ENCODE measurements at regions of chr14 and their contacts with region 1.

Region 1: DNA sequence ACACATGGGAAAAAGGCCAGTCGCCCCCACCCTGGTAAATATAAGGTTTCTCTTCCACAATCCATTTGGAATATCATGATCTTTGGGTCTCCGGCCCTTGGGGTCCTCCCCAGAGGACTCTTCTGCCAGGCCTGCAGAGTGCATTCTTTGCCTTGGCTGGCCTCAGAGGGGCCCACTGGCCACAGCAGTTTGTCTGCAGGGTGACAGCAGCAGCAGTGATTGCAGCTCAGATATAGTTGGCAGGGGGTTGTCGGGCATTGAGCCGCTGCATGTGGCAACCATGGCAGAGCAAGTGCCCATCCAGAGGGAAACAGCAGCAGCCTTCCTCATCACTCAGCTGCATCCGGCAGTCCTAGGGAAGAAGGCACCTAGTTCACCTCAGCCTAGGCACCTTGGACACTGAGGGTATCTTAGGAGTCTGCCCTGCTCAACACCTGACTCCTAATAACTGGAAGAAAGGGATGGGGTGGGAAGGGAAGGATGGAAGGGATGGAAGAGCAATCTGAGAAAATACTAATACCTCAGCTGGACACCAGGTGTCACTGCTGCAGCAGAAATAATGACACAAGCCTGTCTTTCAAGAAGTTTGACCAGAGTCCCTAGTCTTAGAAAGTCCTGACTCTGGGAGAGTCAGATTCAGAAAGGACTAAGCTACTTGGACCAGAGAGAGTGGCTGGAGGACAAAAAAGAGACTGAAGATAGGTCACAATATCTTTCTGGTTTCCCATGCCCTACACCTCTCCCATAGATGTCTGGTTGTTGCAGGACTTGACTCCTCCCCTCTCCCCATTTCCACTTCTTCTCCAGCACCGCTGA is 8.9 kb downstream of the AJUBA start:
- DNase-seq: peak; percentile 82
- ATAC-seq: no peak
- H3K4me3 ChIP-seq: no peak overlapping the region
- H3K27ac ChIP-seq: peak overlapping the region; percentile 97
- H3K4me1 ChIP-seq: peaks cover 65% of the 10 kb centered on the region
- H3K27me3 ChIP-seq: no peaks in the 10 kb centered on the region
- CTCF ChIP-seq: no peak
- EP300 ChIP-seq: no peak
- POLR2A ChIP-seq: peak in 1 of 2 experiments; percentile 73; a peak in 2 of 4 replicates
- RAD21 ChIP-seq: peak; percentile 97

Region 2: GRCh38 chr14:22614224-22614799 is 359.1 kb before region 1 on chr14:
- CTCF ChIA-PET with region 1: no interaction called
- POLR2A ChIA-PET with region 1: no interaction called
- in situ Hi-C with region 1: no loop called
- intact Hi-C with region 1: no loop called
- DNase-seq: peak; percentile 83
- ATAC-seq: peak; percentile 88
- H3K4me3 ChIP-seq: no peak overlapping the region
- H3K27ac ChIP-seq: no peak overlapping the region
- H3K4me1 ChIP-seq: peaks cover 14% of the 10 kb centered on the region
- H3K27me3 ChIP-seq: no peaks in the 10 kb centered on the region
- CTCF ChIP-seq: no peak
- EP300 ChIP-seq: no peak
- POLR2A ChIP-seq: no peak; a peak in 1 of 4 replicates
- RAD21 ChIP-seq: no peak

Region 3: DNA sequence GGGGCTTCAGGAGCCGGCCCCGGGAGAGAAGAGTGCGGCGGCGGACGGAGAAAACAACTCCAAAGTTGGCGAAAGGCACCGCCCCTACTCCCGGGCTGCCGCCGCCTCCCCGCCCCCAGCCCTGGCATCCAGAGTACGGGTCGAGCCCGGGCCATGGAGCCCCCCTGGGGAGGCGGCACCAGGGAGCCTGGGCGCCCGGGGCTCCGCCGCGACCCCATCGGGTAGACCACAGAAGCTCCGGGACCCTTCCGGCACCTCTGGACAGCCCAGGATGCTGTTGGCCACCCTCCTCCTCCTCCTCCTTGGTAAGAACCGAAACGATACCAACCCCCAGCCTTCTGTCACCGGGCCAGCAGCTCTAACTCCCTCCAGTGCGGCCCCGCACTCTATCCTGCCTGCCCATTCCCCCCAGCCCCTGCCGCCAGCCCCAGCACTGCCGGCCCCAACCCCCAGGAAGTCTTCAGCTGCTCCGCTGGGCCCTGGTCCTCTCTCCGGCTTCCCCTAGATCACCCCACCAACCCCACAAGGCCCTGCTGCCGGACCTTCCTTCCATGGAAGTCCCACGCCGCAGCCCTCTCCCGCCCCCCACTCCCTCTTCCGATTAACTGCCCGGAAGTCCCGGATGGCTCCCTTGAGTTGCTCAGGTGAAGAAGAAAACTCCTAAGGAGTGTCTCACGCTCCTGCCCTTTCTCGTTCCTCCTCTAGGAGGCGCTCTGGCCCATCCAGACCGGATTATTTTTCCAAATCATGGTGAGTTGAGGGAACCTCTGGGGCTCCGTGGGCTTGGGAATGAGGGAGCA is 101.2 kb before region 1 on chr14:
- CTCF ChIA-PET with region 1: no interaction called
- POLR2A ChIA-PET with region 1: interaction called, 16 read pairs
- in situ Hi-C with region 1: no loop called
- intact Hi-C with region 1: no loop called
- DNase-seq: peak; percentile 84
- ATAC-seq: peak; percentile 62
- H3K4me3 ChIP-seq: peak overlapping the region; percentile 66 to 93 (median 82)
- H3K27ac ChIP-seq: peak overlapping the region; percentile 85
- H3K4me1 ChIP-seq: peaks cover 35% of the 10 kb centered on the region
- H3K27me3 ChIP-seq: no peaks in the 10 kb centered on the region; a peak in 1 of 5 replicates
- CTCF ChIP-seq: peak; percentile 99
- EP300 ChIP-seq: peak in 1 of 2 experiments; percentile 54; a peak in 2 of 4 replicates
- POLR2A ChIP-seq: no peak
- RAD21 ChIP-seq: peak; percentile 68

Region 4: DNA sequence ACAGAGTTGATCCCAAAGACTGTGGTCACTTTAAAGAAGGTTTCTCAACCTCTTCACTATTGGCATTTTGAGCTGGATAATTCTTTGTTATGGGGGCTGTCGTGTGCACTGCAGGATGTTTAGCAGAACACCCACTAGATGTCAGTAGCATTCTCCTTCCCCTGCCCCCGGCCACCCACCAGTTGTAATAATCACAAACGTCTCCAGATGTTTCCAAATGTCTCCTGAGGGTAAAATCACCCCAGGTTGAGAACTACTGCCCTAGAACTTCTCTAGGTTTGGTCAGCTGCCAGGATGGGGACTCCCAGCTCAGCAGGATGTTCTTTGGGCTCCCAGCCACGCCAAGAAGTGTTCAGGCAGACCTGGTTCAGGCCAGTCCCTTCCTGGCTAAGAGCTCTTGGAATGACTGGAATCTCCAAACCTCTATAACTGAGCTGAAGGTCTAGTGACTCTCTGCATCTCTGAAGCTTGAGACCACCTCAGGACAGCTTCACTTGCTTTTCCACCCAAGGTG is 21.4 kb after region 1 on chr14:
- CTCF ChIA-PET with region 1: interaction called, 5 read pairs
- POLR2A ChIA-PET with region 1: interaction called, 1,670 read pairs
- in situ Hi-C with region 1: no loop called
- intact Hi-C with region 1: no loop called
- DNase-seq: peak; percentile 67
- ATAC-seq: peak; percentile 94
- H3K4me3 ChIP-seq: no peak overlapping the region
- H3K27ac ChIP-seq: no peak overlapping the region
- H3K4me1 ChIP-seq: peaks cover 5% of the 10 kb centered on the region; the same call in 1 of the 2 replicates
- H3K27me3 ChIP-seq: no peaks in the 10 kb centered on the region
- CTCF ChIP-seq: peak; percentile 90
- EP300 ChIP-seq: no peak
- POLR2A ChIP-seq: no peak
- RAD21 ChIP-seq: peak; percentile 87

Region 5: DNA sequence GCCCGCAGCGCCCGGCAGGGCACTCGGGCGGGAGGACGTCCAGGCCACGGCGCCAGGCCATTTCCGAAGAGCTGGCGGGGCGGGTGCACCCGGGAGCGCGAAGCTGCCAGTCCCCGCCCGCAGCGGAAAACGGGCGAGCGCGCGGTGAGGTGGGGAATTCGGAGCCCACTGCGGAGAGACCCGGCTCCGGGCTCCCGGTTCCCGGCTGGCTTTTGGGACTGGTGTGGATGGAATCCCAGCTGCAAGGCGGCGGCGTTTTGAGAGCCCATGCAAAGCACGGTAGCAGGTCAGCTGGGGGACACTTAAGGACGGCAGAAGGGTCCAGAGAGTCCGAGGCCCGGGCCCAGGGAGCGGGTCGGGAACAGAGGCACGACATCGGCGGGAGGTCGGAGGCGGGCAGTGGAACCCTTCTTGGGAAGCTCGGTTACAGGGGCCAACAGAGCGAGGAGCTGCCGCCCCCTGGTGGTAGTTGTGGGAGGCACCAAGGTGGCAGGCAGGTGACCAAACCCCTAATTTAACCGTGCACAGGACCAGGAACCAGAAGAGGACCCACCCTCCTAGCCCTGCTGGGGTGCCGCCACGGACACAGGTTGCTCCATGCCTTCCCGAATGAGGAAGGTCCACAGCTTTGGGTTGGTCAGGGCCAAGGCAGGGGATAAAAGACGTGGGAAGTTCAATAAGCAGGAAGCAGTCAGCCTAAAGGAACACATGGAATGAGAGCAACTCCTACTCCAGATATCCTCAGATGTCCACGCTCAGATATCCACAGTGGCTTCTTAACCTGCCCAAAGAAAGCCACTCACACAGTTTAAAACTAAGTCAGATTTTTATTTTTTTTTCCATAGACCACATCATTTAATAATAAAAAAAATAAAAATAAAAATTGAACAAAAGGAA is 84.6 kb after region 1 on chr14:
- CTCF ChIA-PET with region 1: interaction called, 29 read pairs
- POLR2A ChIA-PET with region 1: interaction called, 62 read pairs
- in situ Hi-C with region 1: no loop called
- intact Hi-C with region 1: loop called (anchors 1 kb)
- DNase-seq: peak; percentile 92
- ATAC-seq: peak; percentile 71
- H3K4me3 ChIP-seq: peak overlapping the region; percentile 55 to 88 (median 64)
- H3K27ac ChIP-seq: no peak overlapping the region
- H3K4me1 ChIP-seq: peaks cover 29% of the 10 kb centered on the region
- H3K27me3 ChIP-seq: peaks cover 0 to 6% of the 10 kb centered on the region in 2 experiments; a peak in 1 of 5 replicates
- CTCF ChIP-seq: peak; percentile 100
- EP300 ChIP-seq: peak in 1 of 2 experiments; percentile 66; a peak in 1 of 4 replicates
- POLR2A ChIP-seq: peak in 1 of 2 experiments; percentile 39; a peak in 1 of 4 replicates
- RAD21 ChIP-seq: peak; percentile 98

Region 6: GRCh38 chr14:23228812-23229211 is 255.4 kb after region 1 on chr14:
- CTCF ChIA-PET with region 1: no interaction called
- POLR2A ChIA-PET with region 1: no interaction called
- in situ Hi-C with region 1: no loop called
- intact Hi-C with region 1: no loop called
- DNase-seq: no peak
- ATAC-seq: no peak
- H3K4me3 ChIP-seq: no peak overlapping the region
- H3K27ac ChIP-seq: no peak overlapping the region
- H3K4me1 ChIP-seq: no peaks in the 10 kb centered on the region
- H3K27me3 ChIP-seq: 0 out of 5 replicates have a peak, but pooled peaks cover 0 to 2% of the 10 kb centered on the region in 2 experiments
- CTCF ChIP-seq: no peak
- EP300 ChIP-seq: no peak
- POLR2A ChIP-seq: no peak
- RAD21 ChIP-seq: no peak

Region 7: GRCh38 chr14:23306410-23307145 is 333.2 kb after region 1 on chr14 and contains the start of gene BCL2L2:
- CTCF ChIA-PET with region 1: no interaction called
- POLR2A ChIA-PET with region 1: interaction called, 18 read pairs
- in situ Hi-C with region 1: no loop called
- intact Hi-C with region 1: no loop called
- DNase-seq: peak; percentile 98
- ATAC-seq: peak; percentile 76
- H3K4me3 ChIP-seq: peak within 1 kb of the TSS; percentile 95 to 99 (median 96)
- H3K27ac ChIP-seq: peak within 1 kb of the TSS; percentile 87
- H3K4me1 ChIP-seq: peaks cover 60% of the 10 kb centered on the region
- H3K27me3 ChIP-seq: no peaks in the 10 kb centered on the region; a peak in 1 of 5 replicates
- CTCF ChIP-seq: peak; percentile 54
- EP300 ChIP-seq: peak; percentile 69 to 85
- POLR2A ChIP-seq: peak in 1 of 2 experiments; percentile 90; a peak in 2 of 4 replicates
- RAD21 ChIP-seq: no peak
- total RNA-seq, gene BCL2L2: 26.6 and 28.1 TPM in 2 replicates